ENCODE measurements at regions of chr5 and their contacts with region 1.

Region 1: DNA sequence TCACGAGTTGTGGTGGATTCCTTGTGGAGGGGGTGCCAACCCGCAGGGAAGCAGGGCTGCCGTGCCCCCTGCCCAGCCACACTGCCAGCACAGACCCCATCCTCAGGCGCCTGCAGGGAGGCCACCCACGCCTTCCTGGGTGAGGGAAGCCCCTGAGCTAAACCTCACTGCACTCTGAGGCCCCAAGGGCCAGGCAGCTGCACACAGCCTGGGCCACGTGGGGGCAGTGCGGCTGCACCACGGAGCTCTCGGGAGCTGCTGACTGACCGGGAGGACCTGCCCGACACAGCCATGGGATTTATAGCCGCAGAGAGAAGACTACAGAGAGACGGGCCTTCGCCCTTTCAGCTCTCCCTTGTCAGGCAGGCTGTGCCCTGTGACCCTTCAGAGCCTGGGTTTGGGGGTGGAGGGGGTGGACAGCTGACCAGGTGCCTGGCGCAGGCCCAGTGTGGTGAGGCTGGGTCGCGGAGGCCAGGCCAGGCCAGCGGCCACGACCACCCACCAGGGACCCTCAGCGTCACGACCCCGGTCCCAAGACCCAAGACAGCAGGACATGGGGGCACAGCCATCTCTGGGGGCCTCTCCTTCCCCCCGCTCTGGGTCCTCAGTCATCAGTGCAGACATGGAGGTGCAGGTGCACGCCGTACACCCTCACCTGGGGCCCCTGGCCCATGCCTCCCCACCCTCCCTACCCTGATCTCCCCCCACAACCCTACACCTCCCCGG is 4.3 kb upstream of the AHRR start:
- DNase-seq: peak; percentile 51
- H3K4me3 ChIP-seq: no peak overlapping the region
- H3K4me3 Mint-ChIP-seq: no peak overlapping the region
- H3K27ac Mint-ChIP-seq: peak overlapping the region; percentile 49
- H3K4me1 ChIP-seq: 0 out of 2 replicates have a peak, but pooled peaks cover 4% of the 10 kb centered on the region
- H3K4me1 Mint-ChIP-seq: no peaks in the 10 kb centered on the region
- H3K27me3 ChIP-seq: no peaks in the 10 kb centered on the region
- H3K27me3 Mint-ChIP-seq: peaks cover 8% of the 10 kb centered on the region
- CTCF ChIP-seq: peak in 1 of 2 experiments; percentile 42

Region 2: DNA sequence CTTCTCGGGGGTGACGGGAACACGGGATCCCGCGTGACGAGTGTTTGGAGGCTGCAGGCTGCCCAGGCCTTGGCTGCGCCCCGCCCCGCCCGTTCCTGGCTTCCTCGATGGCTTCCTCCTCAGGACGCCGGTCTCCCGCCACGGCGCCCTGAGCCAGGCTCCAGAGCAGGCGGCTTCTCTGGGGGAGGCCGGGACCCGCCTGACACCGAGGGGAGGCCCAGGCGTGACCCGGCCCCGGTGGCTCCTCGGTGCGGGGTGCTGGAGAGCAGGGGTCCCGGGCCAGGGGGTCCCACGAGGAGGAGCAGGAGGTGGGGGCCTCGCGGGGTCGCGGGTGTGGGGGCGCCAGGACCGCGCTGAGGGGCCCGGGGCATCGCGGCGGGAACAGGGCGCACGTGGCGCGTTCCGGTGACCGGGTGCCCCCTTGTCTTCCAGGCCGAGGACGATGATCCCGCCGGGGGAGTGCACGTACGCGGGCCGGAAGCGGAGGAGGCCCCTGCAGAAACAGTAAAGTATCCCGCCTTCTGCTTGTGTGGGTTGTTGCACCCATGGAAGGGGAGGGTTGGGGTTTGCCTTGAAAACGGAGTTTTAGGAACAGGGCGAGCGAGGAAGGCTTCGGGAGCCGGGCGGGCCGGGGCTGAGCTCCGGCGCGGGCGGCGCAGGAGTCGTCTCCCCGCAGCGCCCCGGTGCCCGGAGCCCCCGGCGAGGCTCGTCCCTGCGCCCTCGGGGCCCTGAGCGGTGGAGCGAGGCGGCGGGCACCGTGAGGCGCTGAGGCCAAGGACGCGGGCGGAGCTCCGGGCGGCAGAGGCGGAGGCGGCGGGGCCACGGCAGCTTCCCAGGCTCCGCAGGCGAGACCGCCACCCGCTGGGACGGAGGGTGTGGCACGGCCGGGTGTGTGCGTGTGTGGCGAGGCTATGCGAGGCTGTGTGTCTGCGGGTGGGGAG is 26.5 kb after region 1 on chr5:
- CTCF ChIA-PET with region 1: no interaction called
- POLR2A ChIA-PET with region 1: no interaction called
- intact Hi-C with region 1: no loop called
- DNase-seq: no peak
- H3K4me3 ChIP-seq: no peak overlapping the region
- H3K4me3 Mint-ChIP-seq: no peak overlapping the region
- H3K27ac Mint-ChIP-seq: no peak overlapping the region
- H3K4me1 ChIP-seq: no peaks in the 10 kb centered on the region
- H3K4me1 Mint-ChIP-seq: no peaks in the 10 kb centered on the region
- H3K27me3 ChIP-seq: no peaks in the 10 kb centered on the region
- H3K27me3 Mint-ChIP-seq: no peaks in the 10 kb centered on the region
- CTCF ChIP-seq: no peak

Region 3: DNA sequence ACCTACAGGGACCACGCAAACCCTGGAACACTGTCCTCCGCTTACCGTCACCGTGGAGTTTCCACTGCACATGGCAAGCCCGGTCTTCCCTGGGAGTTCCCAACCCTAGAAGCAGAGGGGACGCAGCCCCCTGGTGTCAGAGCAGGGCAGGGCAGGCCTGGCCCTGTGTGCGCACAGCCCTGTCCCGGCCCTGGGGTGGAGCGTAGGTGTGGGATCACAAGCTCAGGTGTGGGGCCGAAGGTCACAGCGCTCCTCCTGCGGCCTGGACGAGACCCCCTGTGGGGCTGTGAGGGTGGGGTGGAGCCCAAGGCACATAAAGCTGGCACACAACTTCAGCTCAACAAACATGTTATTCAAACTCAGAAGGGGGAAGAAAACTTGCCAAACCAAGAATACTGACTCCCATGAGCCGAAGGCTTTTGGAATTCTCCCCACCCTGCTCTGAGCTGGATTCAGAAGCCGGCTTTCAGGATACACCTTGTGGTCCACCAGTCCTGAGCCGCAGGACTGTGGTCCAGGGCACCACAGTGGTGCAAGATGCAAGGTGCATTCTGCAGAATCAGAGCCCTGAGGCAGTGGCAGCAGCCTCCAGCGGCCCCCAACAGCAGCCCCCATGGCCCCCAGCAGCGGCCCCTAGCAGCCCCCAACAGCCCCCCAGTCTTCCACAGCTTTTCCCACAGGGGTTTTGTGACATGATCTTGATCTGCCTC is 113.9 kb after region 1 on chr5:
- CTCF ChIA-PET with region 1: no interaction called
- POLR2A ChIA-PET with region 1: no interaction called
- intact Hi-C with region 1: loop called (anchors 2 kb)
- DNase-seq: peak; percentile 74 to 81
- H3K4me3 ChIP-seq: no peak overlapping the region
- H3K4me3 Mint-ChIP-seq: no peak overlapping the region
- H3K27ac Mint-ChIP-seq: no peak overlapping the region
- H3K4me1 ChIP-seq: peaks cover 7% of the 10 kb centered on the region; the same call in 1 of the 2 replicates
- H3K4me1 Mint-ChIP-seq: no peaks in the 10 kb centered on the region
- H3K27me3 ChIP-seq: no peaks in the 10 kb centered on the region
- H3K27me3 Mint-ChIP-seq: peaks cover 2% of the 10 kb centered on the region
- CTCF ChIP-seq: peak; percentile 74 to 88

Region 4: DNA sequence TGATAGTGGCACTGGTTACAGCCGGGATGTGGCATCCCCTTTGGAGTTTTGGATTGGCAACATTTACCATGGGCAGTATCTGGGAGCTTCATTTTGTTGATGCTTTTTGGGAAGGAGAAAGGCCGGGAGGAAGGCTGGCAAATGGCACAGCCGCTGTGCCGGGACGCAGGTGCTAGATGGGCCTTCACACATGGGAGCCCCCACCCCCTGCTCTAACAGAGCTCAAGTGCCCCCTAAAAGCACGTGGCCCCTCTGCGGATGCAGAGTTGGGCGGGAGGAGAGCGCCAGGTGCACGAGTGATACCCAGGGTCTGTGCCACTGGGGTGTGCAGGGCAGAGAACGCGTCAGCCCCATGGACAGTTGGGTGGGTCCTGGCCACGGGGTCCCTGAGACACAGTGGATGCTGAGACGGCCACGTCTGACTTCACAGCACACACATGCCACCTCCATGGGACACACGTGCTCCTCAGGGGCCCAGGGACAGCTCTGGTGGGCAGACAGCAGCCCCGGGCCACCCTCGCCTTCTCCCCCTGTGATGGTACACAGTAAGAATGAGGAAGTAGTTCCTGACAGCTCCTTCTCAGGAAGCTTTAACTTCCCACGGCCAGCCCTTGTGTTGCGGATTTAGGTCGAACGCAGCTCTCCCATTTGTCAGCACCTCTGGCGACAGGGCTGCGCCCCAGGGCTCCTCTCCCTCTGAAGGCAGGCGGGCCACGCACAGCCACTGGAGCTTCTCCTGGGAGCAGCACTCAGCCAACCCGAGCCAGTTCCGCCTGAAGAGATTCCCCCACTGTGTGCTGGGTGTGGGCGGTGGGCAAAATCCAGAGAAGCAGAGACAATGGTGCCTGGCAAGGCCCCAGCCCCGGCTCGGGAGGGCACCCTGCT is 196.2 kb after region 1 on chr5:
- CTCF ChIA-PET with region 1: no interaction called
- POLR2A ChIA-PET with region 1: no interaction called
- intact Hi-C with region 1: no loop called
- DNase-seq: no peak
- H3K4me3 ChIP-seq: no peak overlapping the region
- H3K4me3 Mint-ChIP-seq: no peak overlapping the region
- H3K27ac Mint-ChIP-seq: no peak overlapping the region
- H3K4me1 ChIP-seq: no peaks in the 10 kb centered on the region; the same call in 1 of the 2 replicates
- H3K4me1 Mint-ChIP-seq: no peaks in the 10 kb centered on the region
- H3K27me3 ChIP-seq: no peaks in the 10 kb centered on the region
- H3K27me3 Mint-ChIP-seq: peaks cover 14% of the 10 kb centered on the region
- CTCF ChIP-seq: no peak